Right lobe of liver (tissue), 6 donors: ENCODE measurements at regions of chr12 and their contacts with region 1.

Region 1: DNA sequence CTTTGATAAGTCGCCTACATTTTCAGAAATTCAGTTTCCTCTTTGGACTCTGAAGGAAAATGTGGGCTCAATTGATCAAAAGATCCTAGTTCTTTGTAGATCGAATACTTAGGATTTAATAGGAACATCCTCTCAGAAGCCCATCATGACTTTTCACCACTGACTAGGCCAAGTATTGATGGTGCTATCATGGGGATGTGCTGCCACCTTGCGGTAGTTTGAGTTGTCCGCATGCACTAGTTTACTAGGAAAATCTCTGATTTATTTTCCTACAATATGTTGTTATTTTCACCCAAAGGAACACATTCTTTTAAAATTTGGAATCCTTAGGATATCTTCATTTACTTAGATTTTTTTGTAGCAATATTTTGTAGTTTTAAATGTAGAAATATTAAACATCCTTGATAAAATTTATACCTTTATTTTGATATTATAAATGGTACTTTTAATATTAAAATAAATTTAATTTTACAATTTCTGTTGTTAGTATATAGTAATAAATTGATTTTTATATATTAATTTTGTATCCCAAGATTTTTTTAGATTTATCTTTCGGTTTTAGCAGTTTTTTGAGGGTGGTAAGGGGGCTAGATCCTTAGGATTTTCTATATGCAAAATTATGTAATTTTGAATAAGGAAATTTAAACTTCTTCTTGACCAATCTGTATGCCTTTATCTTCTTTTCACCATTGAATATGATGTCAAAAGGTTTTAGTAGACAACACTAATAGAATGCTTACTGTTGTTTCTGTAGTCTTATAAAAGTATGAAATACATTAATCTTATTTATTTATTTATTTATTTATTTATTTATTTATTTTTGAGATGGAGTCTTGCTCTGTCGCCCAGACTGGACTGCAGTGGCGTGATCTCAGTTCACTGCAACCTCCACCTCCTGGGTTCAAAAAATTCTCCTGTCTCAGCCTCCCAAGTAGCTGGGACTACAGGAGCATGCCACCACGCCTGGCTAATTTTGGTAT is 52.9 kb upstream of the OR9K2 start:
- DNase-seq: peak; percentile 68 to 73 (median 72)
- ATAC-seq: peak; percentile 80 to 86 (median 84)
- H3K4me3 ChIP-seq: no peak overlapping the region
- H3K27ac ChIP-seq: no peak overlapping the region
- H3K4me1 ChIP-seq: no peaks in the 10 kb centered on the region
- H3K27me3 ChIP-seq: peaks cover 0 to 8% of the 10 kb centered on the region in 2 donors
- CTCF ChIP-seq: peak; percentile 77 to 94 (median 87)
- POLR2A ChIP-seq: no peak

Region 2: GRCh38 chr12:54993161-54993835 is 80.0 kb before region 1 on chr12:
- intact Hi-C with region 1: loop called (anchors 5 kb)
- DNase-seq: peak in 1 of 3 donors; percentile 51
- ATAC-seq: peak; percentile 86 to 89 (median 86)
- H3K4me3 ChIP-seq: no peak overlapping the region
- H3K27ac ChIP-seq: no peak overlapping the region
- H3K4me1 ChIP-seq: no peaks in the 10 kb centered on the region
- H3K27me3 ChIP-seq: no peaks in the 10 kb centered on the region
- CTCF ChIP-seq: peak; percentile 88 to 97 (median 90)
- POLR2A ChIP-seq: no peak

Region 3: DNA sequence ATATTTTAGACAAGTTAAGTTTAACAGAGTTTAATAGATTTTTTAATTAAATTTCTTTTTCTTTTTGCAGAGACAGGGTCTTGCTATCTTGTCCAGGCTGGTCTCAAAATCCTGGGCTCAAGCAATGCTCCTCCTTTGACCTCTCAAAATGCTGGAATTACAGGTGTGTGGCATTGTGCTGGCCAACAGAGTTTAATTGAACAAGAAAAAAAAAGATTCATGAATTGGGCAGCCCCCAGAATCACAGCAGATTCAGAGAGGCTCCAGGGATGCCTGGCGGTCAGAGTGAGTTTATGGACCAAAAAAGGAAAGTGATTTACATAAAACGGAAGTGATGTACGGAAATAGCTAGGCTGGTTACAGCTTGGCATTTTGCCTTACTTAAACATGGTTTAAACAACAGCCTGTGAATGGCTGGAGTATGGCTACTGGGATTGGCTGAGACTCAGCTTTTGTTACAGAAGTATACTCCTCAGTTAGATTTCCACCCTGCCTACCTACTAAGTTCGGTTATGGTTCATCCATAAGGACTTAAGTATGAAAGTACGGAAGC is 74.3 kb before region 1 on chr12:
- intact Hi-C with region 1: loop called (anchors 5 kb)
- DNase-seq: no peak
- ATAC-seq: no peak
- H3K4me3 ChIP-seq: no peak overlapping the region
- H3K27ac ChIP-seq: no peak overlapping the region
- H3K4me1 ChIP-seq: no peaks in the 10 kb centered on the region
- H3K27me3 ChIP-seq: no peaks in the 10 kb centered on the region
- CTCF ChIP-seq: no peak
- POLR2A ChIP-seq: no peak

Region 4: DNA sequence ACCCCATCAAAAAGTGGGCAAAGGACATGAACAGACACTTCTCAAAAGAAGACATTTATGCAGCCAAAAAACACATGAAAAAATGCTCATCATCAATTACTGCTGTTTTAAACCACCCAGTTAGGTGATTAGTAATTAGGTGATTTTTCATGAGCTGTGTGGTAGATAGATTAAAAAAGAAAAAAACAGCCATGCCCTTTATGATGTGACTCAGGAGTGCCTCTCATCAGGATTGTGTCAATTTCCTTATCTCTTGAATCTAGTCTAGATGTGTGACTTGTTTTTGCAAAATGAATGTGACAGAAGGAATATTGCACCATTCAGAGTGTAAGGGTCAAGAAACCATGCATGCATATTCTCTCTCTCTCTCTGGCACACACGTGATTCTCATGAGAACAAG is 153.2 kb after region 1 on chr12:
- intact Hi-C with region 1: no loop called
- DNase-seq: no peak
- ATAC-seq: no peak
- H3K4me3 ChIP-seq: no peak overlapping the region
- H3K27ac ChIP-seq: no peak overlapping the region
- H3K4me1 ChIP-seq: no peaks in the 10 kb centered on the region
- H3K27me3 ChIP-seq: no peaks in the 10 kb centered on the region
- CTCF ChIP-seq: no peak
- POLR2A ChIP-seq: no peak